ENCODE measurements at regions of chr2 and their contacts with region 1.

Region 1: GRCh38 chr2:209368900-209369299 is 54.9 kb upstream of the MAP2 start:
- DNase-seq: peak; percentile 78 to 97
- H3K4me3 ChIP-seq: 0 out of 2 replicates have a peak overlapping the region, but pooled peaks have one; percentile 6
- H3K27ac ChIP-seq: peak overlapping the region; percentile 99
- H3K4me1 ChIP-seq: peaks cover 19% of the 10 kb centered on the region
- H3K27me3 ChIP-seq: no peaks in the 10 kb centered on the region
- CTCF ChIP-seq: no peak

Region 2: GRCh38 chr2:209380293-209380692 is 11.4 kb after region 1 on chr2:
- CTCF ChIA-PET with region 1: interaction called, 4 read pairs
- POLR2A ChIA-PET with region 1: interaction called, 4 read pairs
- intact Hi-C with region 1: loop called (anchors 1 kb)
- DNase-seq: peak in 1 of 2 experiments; percentile 42
- H3K4me3 ChIP-seq: no peak overlapping the region
- H3K27ac ChIP-seq: peak overlapping the region; percentile 39; the same call in 1 of the 2 replicates
- H3K4me1 ChIP-seq: peaks cover 19% of the 10 kb centered on the region
- H3K27me3 ChIP-seq: no peaks in the 10 kb centered on the region
- CTCF ChIP-seq: no peak

Region 3: GRCh38 chr2:209640358-209640757 is 271.5 kb after region 1 on chr2:
- CTCF ChIA-PET with region 1: no interaction called
- POLR2A ChIA-PET with region 1: interaction called, 13 read pairs
- intact Hi-C with region 1: no loop called
- DNase-seq: peak in 1 of 2 experiments; percentile 81
- H3K4me3 ChIP-seq: no peak overlapping the region
- H3K27ac ChIP-seq: peak overlapping the region; percentile 37
- H3K4me1 ChIP-seq: peaks cover 40% of the 10 kb centered on the region
- H3K27me3 ChIP-seq: no peaks in the 10 kb centered on the region
- CTCF ChIP-seq: no peak